ENCODE measurements at regions of chr15 and their contacts with region 1.

Region 1: DNA sequence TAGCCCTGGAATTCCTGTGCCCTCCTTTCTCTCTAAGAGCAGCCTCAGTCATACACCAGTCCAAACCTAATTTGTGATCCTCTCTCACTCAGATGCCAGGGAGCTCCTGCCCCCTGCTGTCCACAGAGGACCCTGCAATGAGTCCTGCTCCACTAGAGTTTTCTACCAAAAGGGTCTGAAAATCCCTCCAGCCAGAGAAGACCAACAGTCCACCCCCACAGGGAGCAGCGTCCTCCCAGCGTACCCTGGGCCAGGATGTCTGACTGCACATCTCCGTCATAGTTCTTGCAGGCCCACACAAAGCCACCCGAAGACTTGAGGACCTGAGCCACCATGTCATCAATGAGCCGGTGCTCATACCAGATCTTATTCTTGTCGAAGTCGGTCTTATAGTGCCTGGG is 15.4 kb downstream of the IDH2 start:
- DNase-seq: peak; percentile 63
- H3K4me3 Mint-ChIP-seq: no peak overlapping the region
- H3K27ac Mint-ChIP-seq: no peak overlapping the region
- H3K4me1 Mint-ChIP-seq: peaks cover 16% of the 10 kb centered on the region
- H3K27me3 Mint-ChIP-seq: no peaks in the 10 kb centered on the region

Region 2: GRCh38 chr15:89665449-89666181 is 421.3 kb before region 1 on chr15:
- CTCF ChIA-PET with region 1: no interaction called
- POLR2A ChIA-PET with region 1: no interaction called
- DNase-seq: peak; percentile 34
- H3K4me3 Mint-ChIP-seq: peak overlapping the region; percentile 30
- H3K27ac Mint-ChIP-seq: no peak overlapping the region
- H3K4me1 Mint-ChIP-seq: peaks cover 4% of the 10 kb centered on the region
- H3K27me3 Mint-ChIP-seq: peaks cover 32% of the 10 kb centered on the region

Region 3: DNA sequence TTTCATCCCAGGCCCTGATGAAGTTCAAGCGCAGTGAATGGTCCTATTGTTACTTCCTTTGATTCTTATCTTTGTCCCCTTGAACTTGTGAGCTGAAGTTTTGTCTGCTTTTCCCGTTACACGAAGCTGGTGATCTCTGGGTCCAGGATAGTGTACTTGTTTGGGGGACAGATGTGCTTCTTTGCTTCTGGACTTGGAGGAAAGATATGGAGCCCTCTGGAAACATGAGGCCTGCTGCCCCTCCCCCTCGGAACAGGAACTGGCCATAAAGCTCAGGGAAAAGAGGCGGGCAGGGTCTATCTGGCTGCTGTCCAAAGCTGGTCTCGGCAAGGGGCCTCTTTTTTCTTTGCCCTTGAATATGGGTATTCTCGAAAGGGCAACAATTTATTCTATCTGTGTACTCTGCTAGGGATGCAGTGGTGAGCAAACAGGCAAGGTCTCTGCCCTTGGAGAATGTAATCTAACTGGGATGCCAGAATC is 32.2 kb before region 1 on chr15:
- CTCF ChIA-PET with region 1: no interaction called
- POLR2A ChIA-PET with region 1: no interaction called
- DNase-seq: no peak
- H3K4me3 Mint-ChIP-seq: no peak overlapping the region
- H3K27ac Mint-ChIP-seq: no peak overlapping the region
- H3K4me1 Mint-ChIP-seq: peaks cover 19% of the 10 kb centered on the region
- H3K27me3 Mint-ChIP-seq: no peaks in the 10 kb centered on the region

Region 4: DNA sequence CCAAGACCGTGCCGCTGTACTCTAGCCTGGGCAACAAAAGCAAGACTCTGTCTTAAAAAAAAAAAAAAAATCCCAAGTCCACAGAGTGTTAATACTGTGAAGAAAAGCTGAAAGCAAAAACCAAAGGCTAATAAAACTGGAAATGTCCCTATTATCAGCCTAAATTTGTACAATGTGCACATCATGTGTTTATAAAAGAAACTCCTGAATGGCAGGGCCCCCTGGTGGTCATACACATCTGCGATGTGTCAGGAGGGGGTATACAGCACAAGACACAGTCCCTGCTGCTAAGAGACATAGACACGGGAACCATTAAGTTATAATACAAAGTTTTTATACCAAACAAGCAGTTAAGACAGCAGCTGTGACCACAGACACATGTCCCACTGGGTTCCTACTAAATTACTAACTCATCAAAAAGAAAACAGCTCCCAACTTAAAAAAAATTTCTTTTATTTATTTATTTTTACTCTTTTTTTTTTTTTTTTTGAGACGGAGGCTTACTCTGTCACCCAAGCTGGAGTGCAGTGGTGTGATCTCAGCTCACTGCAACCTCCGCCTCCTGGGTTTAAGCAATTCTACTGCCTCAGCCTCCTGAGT is 15.6 kb before region 1 on chr15:
- CTCF ChIA-PET with region 1: interaction called, 13 read pairs
- POLR2A ChIA-PET with region 1: no interaction called
- DNase-seq: peak; percentile 83
- H3K4me3 Mint-ChIP-seq: no peak overlapping the region
- H3K27ac Mint-ChIP-seq: no peak overlapping the region
- H3K4me1 Mint-ChIP-seq: peaks cover 10% of the 10 kb centered on the region
- H3K27me3 Mint-ChIP-seq: no peaks in the 10 kb centered on the region

Region 5: DNA sequence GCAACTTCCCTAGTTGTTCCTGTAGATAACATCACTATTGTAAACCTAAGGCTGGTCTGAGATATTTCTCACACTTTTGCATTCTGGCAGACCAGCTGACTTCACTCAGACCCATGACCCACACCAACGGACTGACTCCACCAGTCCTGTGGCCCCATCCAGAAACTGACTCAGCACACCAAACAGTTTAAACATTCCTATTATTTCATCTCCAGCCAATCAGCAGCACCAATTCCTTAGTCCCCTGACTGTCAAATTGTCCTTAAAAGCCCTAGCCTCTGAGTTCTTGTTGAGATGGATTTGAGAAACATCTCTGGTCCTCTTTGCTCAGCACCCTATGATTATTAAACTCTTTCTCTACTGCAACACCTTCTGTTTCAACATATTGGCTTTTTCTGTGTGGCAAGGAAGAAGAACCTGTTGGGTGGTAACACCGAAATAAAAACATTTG is 27.6 kb after region 1 on chr15:
- CTCF ChIA-PET with region 1: no interaction called
- POLR2A ChIA-PET with region 1: no interaction called
- DNase-seq: no peak
- H3K4me3 Mint-ChIP-seq: no peak overlapping the region
- H3K27ac Mint-ChIP-seq: no peak overlapping the region
- H3K4me1 Mint-ChIP-seq: no peaks in the 10 kb centered on the region
- H3K27me3 Mint-ChIP-seq: peaks cover 16% of the 10 kb centered on the region

Measured in activated CD4-positive, alpha-beta memory T cell treated with anti-CD3 and anti-CD28 coated beads, Interleukin-2, amount 10 ng/mL, durations not matched to agents 7 days and 5 days (primary cell).